ENCODE measurements at regions of chr3 and their contacts with region 1.

Region 1: GRCh38 chr3:163175970-163176369 is 1679.4 kb downstream of the OTOL1 start:
- DNase-seq: no peak
- H3K4me3 ChIP-seq: no peak overlapping the region
- H3K27ac ChIP-seq: no peak overlapping the region
- H3K4me1 ChIP-seq: no peaks in the 10 kb centered on the region
- H3K27me3 ChIP-seq: no peaks in the 10 kb centered on the region
- CTCF ChIP-seq: no peak

Region 2: GRCh38 chr3:163159306-163159705 is 16.7 kb before region 1 on chr3:
- CTCF ChIA-PET with region 1: no interaction called
- dilution Hi-C with region 1: no loop called
- in situ Hi-C with region 1: no loop called
- intact Hi-C with region 1: no loop called
- DNase-seq: no peak
- H3K4me3 ChIP-seq: no peak overlapping the region
- H3K27ac ChIP-seq: no peak overlapping the region
- H3K4me1 ChIP-seq: no peaks in the 10 kb centered on the region
- H3K27me3 ChIP-seq: no peaks in the 10 kb centered on the region
- CTCF ChIP-seq: no peak

Region 3: DNA sequence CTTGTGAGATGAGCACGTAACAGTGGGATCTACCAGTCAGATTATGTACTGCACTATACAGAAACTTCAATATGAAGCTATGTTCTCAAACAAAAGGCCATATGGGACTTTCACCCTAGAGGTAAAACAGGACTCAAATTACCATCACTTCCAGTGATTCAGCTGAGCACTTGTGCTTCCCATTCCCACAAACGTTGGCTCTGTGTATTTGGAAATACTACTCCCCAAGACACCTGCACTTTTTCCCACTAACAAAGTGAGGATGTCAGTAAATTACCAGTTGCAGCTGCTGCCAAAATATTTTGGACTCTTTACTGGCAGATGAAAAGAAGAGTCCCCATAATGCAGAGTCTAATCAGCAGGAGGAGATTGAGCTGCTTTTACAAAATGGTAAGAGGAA is 332.2 kb after region 1 on chr3:
- CTCF ChIA-PET with region 1: no interaction called
- dilution Hi-C with region 1: loop called (anchors 5 kb)
- in situ Hi-C with region 1: no loop called
- intact Hi-C with region 1: no loop called
- DNase-seq: no peak
- H3K4me3 ChIP-seq: no peak overlapping the region
- H3K27ac ChIP-seq: no peak overlapping the region
- H3K4me1 ChIP-seq: no peaks in the 10 kb centered on the region
- H3K27me3 ChIP-seq: no peaks in the 10 kb centered on the region
- CTCF ChIP-seq: no peak

Measured in mammary epithelial cell (primary cell).